Cardiac septum (tissue), 1 donor: ENCODE measurements at regions of chr2 and their contacts with region 1.

Region 1: DNA sequence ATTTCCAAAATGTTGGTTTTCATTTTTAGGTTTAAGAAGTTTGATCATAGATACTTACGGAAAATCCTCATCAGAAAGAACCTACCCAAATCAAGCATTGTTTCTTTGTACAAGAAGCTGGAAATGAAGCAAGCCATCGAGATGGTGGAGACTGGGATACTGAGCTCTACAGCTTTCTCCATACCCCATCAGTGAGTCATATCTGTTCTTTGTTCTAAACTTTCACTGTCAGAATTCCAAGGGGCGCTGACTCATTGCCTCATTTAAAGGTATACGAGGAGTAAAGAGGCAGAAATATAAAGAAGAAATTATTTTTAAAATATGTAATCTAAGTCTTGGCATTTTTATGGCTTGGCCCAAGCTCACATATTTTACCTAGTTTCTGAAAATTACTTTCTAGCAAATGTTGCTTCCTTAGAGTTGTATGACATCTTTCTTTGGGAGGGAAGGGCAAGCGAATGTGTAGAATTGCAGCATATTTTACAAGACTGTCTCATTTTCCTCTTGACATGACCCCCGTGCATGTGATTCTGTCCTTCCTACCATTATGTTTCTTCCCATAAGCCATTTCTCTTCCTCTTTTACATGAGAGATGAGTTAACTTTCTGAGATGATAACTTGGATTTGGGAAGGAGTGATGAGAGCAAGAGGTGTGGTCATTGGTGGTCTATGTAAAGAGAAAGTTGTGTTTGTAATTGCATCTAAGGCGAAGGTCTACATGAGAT is 41.2 kb downstream of the SLC9A4 start:
- DNase-seq: no peak

Region 2: GRCh38 chr2:102498414-102498813 is 15.8 kb before region 1 on chr2:
- intact Hi-C with region 1: no loop called
- DNase-seq: no peak

Region 3: DNA sequence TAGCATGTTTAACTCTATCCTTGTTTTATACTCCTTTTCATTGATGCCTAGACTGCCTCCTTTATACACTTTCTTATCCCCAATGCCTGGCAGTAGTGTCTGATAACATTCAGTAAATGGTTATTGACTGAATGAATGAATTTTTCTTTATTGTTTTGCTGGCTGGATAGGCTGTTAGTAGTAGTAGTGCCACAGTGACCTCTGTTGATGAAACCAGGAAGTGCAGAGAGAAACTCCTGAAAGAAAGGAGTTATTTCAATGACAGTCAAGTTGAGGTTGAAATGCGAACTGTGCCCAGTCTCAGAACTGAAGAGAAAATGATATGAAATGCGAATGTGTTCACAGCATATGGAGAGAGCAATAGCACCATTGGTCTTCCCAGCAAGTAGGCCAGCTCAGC is 78.4 kb after region 1 on chr2:
- intact Hi-C with region 1: loop called (anchors 10 kb)
- DNase-seq: no peak